KBM-7 (cell line): ENCODE measurements at regions of chr13 and their contacts with region 1.

Region 1: DNA sequence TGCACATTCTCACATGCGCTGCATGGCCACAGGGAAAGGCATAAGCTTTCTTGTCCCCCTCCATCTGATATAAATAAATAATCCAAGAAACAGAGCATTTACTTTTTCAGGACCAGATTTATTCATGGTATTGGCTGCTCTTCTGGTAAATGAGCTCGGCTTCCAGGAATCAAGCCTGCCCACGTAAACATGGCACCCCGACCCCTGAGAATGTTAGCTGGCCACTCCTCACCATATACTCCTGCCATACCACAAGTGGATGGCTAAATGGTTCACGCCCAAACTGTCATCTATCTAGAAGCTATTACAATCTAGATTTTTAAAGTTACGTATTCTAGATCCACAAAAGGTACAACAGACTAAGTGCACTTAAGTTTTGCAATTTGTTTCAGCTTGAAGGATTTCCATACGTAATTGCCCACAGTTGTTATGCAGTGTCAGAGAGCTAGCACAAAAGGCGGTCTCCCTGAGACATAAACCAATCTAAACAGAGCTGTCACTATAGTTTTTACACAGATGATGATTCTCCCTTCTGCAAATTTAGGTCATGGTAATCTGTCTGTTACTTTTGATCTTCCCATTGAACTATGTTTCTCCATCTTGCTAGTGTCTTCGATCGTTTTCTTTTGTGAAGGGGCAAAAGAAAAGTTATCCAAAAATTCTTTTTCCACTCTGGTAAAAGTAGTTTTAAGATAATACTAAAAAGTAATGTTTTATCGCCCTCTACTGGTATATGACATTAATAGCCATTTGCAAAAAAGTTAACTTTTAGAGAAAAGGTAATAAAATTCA is 16.2 kb upstream of the FOXO1 start:
- DNase-seq: peak; percentile 59

Region 2: DNA sequence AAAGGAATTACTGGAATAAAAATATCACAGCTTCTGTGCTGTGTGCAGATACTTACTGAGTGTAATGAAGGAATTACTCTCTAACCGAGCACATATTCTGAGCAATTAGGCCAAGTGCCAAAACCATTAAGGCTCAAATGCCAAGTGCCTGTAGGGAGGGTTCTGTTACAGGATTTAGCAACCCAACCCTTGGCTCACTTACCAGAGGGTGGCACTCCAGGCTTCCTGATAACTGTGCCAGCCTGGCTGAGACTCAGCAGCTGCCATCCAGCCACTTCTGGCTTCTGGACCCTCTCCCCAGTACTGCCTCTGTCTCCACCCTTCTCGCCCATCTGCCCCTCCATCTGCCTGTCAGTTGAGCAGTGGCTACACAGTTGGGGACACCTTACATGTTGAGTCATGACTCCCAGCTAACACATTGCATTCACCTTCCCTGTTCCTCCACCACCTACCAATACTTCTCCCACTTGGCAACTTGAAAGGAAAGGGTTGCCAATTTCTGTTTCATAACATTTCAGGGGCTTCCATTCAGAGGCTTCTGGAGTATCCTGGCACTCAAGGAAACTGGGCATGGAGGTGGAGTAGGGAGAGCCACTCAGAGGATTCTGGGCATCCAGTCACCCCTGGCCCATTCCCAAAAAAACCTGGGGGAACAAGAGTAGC is 916.7 kb before region 1 on chr13:
- in situ Hi-C with region 1: loop called (anchors 25 kb)
- DNase-seq: no peak

Region 3: GRCh38 chr13:39892721-39893685 is 789.6 kb before region 1 on chr13:
- in situ Hi-C with region 1: no loop called
- DNase-seq: peak; percentile 67

Region 4: GRCh38 chr13:40069173-40070044 is 613.2 kb before region 1 on chr13:
- in situ Hi-C with region 1: loop called (anchors 25 kb)
- DNase-seq: peak; percentile 75

Region 5: DNA sequence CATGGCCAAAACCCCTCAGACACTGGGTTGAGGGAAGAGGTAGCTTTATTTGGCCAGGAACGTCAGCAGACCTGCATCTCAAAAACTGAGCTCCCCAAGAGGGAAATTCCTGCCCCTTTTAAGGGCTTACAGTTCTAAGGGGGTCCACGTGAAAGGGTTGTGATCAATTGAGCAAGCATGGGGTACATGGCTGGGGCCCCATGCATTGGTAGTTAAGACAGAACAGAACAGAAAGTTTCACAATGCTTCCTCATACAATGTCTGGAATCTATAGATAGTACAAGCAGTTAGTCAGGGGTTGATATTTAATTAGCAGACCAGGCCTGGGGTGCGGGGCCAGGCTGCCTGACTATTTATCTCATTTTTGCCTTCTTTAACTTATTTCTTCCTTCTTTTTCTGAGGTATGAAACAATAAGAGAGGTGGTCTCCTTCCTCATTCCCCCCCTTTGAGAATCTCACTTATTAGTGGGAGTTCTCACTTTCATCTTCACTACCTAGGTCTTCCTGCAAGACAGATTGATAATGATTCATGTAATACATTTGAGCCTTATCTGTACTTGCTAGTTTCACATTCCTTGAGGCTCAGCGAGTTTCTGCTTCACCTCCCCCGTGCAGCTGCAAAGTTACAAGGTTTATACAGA is 191.6 kb after region 1 on chr13:
- in situ Hi-C with region 1: no loop called
- DNase-seq: peak; percentile 41